ENCODE measurements at regions of chr1 and their contacts with region 1.

Region 1: GRCh38 chr1:192477630-192478029 is 97.9 kb upstream of the RGS1 start:
- DNase-seq: no peak
- H3K4me3 ChIP-seq: no peak overlapping the region
- H3K27ac ChIP-seq: no peak overlapping the region
- H3K4me1 ChIP-seq: no peaks in the 10 kb centered on the region
- H3K27me3 ChIP-seq: no peaks in the 10 kb centered on the region
- CTCF ChIP-seq: peak in 2 of 3 experiments; percentile 20 to 23; a peak in 2 of 4 replicates
- EP300 ChIP-seq: no peak
- POLR2A ChIP-seq: no peak
- RAD21 ChIP-seq: peak; percentile 59 to 70

Region 2: GRCh38 chr1:192580351-192580962 is 102.8 kb after region 1 on chr1:
- CTCF ChIA-PET with region 1: interaction called, 83 read pairs
- POLR2A ChIA-PET with region 1: no interaction called
- DNase-seq: no peak
- H3K4me3 ChIP-seq: no peak overlapping the region
- H3K27ac ChIP-seq: no peak overlapping the region
- H3K4me1 ChIP-seq: no peaks in the 10 kb centered on the region; a peak in 1 of 7 replicates
- H3K27me3 ChIP-seq: no peaks in the 10 kb centered on the region
- CTCF ChIP-seq: peak in 2 of 3 experiments; percentile 48 to 57; a peak in 3 of 4 replicates
- EP300 ChIP-seq: no peak
- POLR2A ChIP-seq: no peak
- RAD21 ChIP-seq: peak; percentile 76 to 84

Region 3: DNA sequence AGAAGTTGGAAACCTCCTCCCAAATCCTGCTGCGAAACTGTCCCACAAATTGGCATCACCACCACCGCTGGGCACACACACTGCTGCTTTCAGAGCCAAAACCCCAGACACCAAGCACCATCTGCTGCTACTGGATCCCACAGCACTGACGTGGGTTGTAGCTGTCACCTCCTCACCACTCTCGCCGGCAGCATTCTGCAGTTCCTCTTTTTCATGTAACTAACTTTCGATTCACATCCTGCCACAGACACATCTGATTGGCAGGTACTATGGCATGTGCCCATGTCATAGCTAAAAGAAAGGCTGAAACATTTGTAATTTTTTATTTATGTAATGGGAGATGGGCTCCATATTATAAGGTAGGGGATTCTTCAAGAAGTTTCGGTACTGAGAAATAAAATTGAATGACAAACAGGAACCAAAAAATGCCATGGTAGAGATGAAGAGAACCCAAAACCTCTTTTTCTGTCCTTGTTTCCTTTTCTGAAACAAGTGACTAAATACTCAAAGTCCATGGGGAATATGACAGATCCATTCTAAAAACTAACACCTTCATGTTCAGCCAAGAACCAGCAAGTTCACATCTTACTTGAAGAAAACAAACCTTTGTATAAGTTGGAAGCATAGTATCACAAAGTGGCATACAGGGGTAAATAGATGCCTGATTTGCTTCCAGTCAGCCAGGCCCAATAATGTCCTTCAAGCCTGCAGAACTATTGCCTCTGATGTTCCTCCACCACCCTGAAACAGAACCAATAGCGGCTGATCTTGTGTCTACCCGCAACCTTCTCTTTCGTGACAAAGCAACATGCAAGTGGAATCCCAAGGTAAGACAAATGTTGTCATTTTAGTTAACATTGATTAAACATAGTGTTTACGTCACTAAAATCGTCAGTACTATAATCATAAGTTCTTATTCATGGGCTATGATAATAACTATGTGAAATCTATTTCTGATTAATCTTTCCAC is 131.8 kb after region 1 on chr1:
- CTCF ChIA-PET with region 1: interaction called, 16 read pairs
- POLR2A ChIA-PET with region 1: no interaction called
- DNase-seq: no peak
- H3K4me3 ChIP-seq: no peak overlapping the region
- H3K27ac ChIP-seq: no peak overlapping the region
- H3K4me1 ChIP-seq: no peaks in the 10 kb centered on the region
- H3K27me3 ChIP-seq: no peaks in the 10 kb centered on the region
- CTCF ChIP-seq: no peak
- EP300 ChIP-seq: no peak
- POLR2A ChIP-seq: no peak
- RAD21 ChIP-seq: no peak

Region 4: DNA sequence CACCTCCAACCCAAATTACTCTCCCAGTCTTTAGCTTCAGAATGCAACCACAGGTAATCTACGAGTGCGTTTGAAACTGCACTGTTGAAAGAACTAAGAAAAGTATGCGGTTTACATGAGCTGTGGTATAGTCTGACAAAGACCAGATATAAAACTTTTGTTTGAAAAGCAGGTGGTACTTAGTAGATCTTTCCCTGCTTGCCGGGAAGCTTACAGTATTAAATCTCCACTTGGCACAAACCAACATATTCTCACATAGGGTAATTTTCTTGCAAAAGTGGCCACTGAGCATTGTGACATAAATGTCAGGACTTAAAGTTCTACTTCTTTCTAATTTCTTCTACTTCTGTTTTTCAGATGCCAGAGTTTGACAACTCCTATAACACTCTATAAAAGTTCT is 339.6 kb after region 1 on chr1:
- CTCF ChIA-PET with region 1: no interaction called
- POLR2A ChIA-PET with region 1: no interaction called
- DNase-seq: no peak
- H3K4me3 ChIP-seq: no peak overlapping the region
- H3K27ac ChIP-seq: no peak overlapping the region
- H3K4me1 ChIP-seq: no peaks in the 10 kb centered on the region
- H3K27me3 ChIP-seq: no peaks in the 10 kb centered on the region
- CTCF ChIP-seq: no peak
- EP300 ChIP-seq: no peak
- POLR2A ChIP-seq: no peak
- RAD21 ChIP-seq: no peak

Region 5: GRCh38 chr1:193019442-193020026 is 541.9 kb after region 1 on chr1:
- CTCF ChIA-PET with region 1: interaction called, 11 read pairs
- POLR2A ChIA-PET with region 1: no interaction called
- DNase-seq: no peak
- H3K4me3 ChIP-seq: no peak overlapping the region
- H3K27ac ChIP-seq: no peak overlapping the region
- H3K4me1 ChIP-seq: no peaks in the 10 kb centered on the region
- H3K27me3 ChIP-seq: no peaks in the 10 kb centered on the region
- CTCF ChIP-seq: peak in 1 of 3 experiments; percentile 13; a peak in 1 of 4 replicates
- EP300 ChIP-seq: no peak
- POLR2A ChIP-seq: no peak
- RAD21 ChIP-seq: peak; percentile 64

Measured in H1 (cell line).